Activated CD8-positive, alpha-beta T cell treated with anti-CD3 and anti-CD28 coated beads, Interleukin-2, amount 10 ng/mL, durations not matched to agents 7 days and 5 days (primary cell): ENCODE measurements at regions of chr1 and their contacts with region 1.

Region 1: GRCh38 chr1:20633190-20634064 is at the start of gene PINK1:
- DNase-seq: peak; percentile 85
- ATAC-seq: peak; percentile 91
- H3K4me3 Mint-ChIP-seq: peak within 1 kb of the TSS; percentile 80
- H3K27ac Mint-ChIP-seq: peak within 1 kb of the TSS; percentile 34
- H3K4me1 Mint-ChIP-seq: peaks cover 10% of the 10 kb centered on the region
- H3K27me3 Mint-ChIP-seq: peaks cover 2% of the 10 kb centered on the region
- total RNA-seq, gene PINK1: 3.3 to 3.6 TPM

Region 2: GRCh38 chr1:20485527-20486456 is 147.6 kb before region 1 on chr1 and contains the start of gene CAMK2N1:
- CTCF ChIA-PET with region 1: no interaction called
- POLR2A ChIA-PET with region 1: no interaction called
- DNase-seq: peak; percentile 57
- ATAC-seq: peak; percentile 68
- H3K4me3 Mint-ChIP-seq: peak within 1 kb of the TSS; percentile 67
- H3K27ac Mint-ChIP-seq: peak within 1 kb of the TSS; percentile 34
- H3K4me1 Mint-ChIP-seq: peaks cover 12% of the 10 kb centered on the region
- H3K27me3 Mint-ChIP-seq: peaks cover 68% of the 10 kb centered on the region
- total RNA-seq, gene CAMK2N1: 0.29 to 0.44 TPM

Region 3: GRCh38 chr1:20507564-20508410 is 125.6 kb before region 1 on chr1 and contains the start of gene MUL1:
- CTCF ChIA-PET with region 1: interaction called, 14 read pairs
- POLR2A ChIA-PET with region 1: interaction called, 4 read pairs
- DNase-seq: peak; percentile 96
- ATAC-seq: peak; percentile 90
- H3K4me3 Mint-ChIP-seq: peak within 1 kb of the TSS; percentile 93
- H3K27ac Mint-ChIP-seq: peak within 1 kb of the TSS; percentile 95
- H3K4me1 Mint-ChIP-seq: peaks cover 24% of the 10 kb centered on the region
- H3K27me3 Mint-ChIP-seq: peaks cover 3% of the 10 kb centered on the region
- total RNA-seq, gene MUL1: 17.2 to 18.6 TPM

Region 4: GRCh38 chr1:20526267-20526666 is 107.2 kb before region 1 on chr1:
- CTCF ChIA-PET with region 1: interaction called, 10 read pairs
- POLR2A ChIA-PET with region 1: interaction called, 3 read pairs
- DNase-seq: no peak
- ATAC-seq: no peak
- H3K4me3 Mint-ChIP-seq: no peak overlapping the region
- H3K27ac Mint-ChIP-seq: no peak overlapping the region
- H3K4me1 Mint-ChIP-seq: no peaks in the 10 kb centered on the region
- H3K27me3 Mint-ChIP-seq: peaks cover 34% of the 10 kb centered on the region

Region 5: GRCh38 chr1:20574686-20575540 is 58.5 kb before region 1 on chr1:
- CTCF ChIA-PET with region 1: interaction called, 20 read pairs
- POLR2A ChIA-PET with region 1: no interaction called
- DNase-seq: peak; percentile 73
- ATAC-seq: peak; percentile 88
- H3K4me3 Mint-ChIP-seq: no peak overlapping the region
- H3K27ac Mint-ChIP-seq: no peak overlapping the region
- H3K4me1 Mint-ChIP-seq: peaks cover 3% of the 10 kb centered on the region
- H3K27me3 Mint-ChIP-seq: peaks cover 11% of the 10 kb centered on the region

Region 6: GRCh38 chr1:20661207-20662109 is 28.0 kb after region 1 on chr1 and contains the start of gene DDOST:
- CTCF ChIA-PET with region 1: interaction called, 58 read pairs
- POLR2A ChIA-PET with region 1: interaction called, 5 read pairs
- DNase-seq: peak; percentile 97
- ATAC-seq: peak; percentile 99
- H3K4me3 Mint-ChIP-seq: peak within 1 kb of the TSS; percentile 100
- H3K27ac Mint-ChIP-seq: peak within 1 kb of the TSS; percentile 98
- H3K4me1 Mint-ChIP-seq: peaks cover 44% of the 10 kb centered on the region
- H3K27me3 Mint-ChIP-seq: no peaks in the 10 kb centered on the region
- total RNA-seq, gene DDOST: 163 to 166 TPM